GM12878 (cell line): ENCODE measurements at regions of chr1 and their contacts with region 1.

Region 1: GRCh38 chr1:16946646-16947045 is 24.9 kb downstream of the CROCC start:
- DNase-seq: no peak
- ATAC-seq: no peak
- H3K4me3 ChIP-seq: no peak overlapping the region
- H3K27ac ChIP-seq: no peak overlapping the region
- H3K4me1 ChIP-seq: no peaks in the 10 kb centered on the region
- H3K27me3 ChIP-seq: no peaks in the 10 kb centered on the region
- CTCF ChIP-seq: no peak
- EP300 ChIP-seq: no peak
- POLR2A ChIP-seq: no peak
- RAD21 ChIP-seq: no peak

Region 2: GRCh38 chr1:16613185-16614147 is 333.2 kb before region 1 on chr1 and contains the start of gene NBPF1:
- CTCF ChIA-PET with region 1: interaction called, 17 read pairs
- POLR2A ChIA-PET with region 1: no interaction called
- RAD21 ChIA-PET with region 1: interaction called, 5 read pairs
- SMC1A ChIA-PET with region 1: interaction called, 4 read pairs
- in situ Hi-C with region 1: no loop called
- intact Hi-C with region 1: no loop called
- DNase-seq: peak; percentile 56
- ATAC-seq: peak; percentile 99
- H3K4me3 ChIP-seq: peak within 1 kb of the TSS; percentile 73
- H3K27ac ChIP-seq: no peak within 1 kb of the TSS
- H3K4me1 ChIP-seq: peaks cover 4% of the 10 kb centered on the region
- H3K27me3 ChIP-seq: peaks cover 13 to 18% of the 10 kb centered on the region in 2 experiments
- CTCF ChIP-seq: peak in 1 of 3 experiments; percentile 7; a peak in 1 of 6 replicates
- EP300 ChIP-seq: no peak
- POLR2A ChIP-seq: peak; percentile 74; the same call in 1 of the 2 replicates
- RAD21 ChIP-seq: no peak
- polyA plus RNA-seq, gene NBPF1: 0.20 to 0.34 TPM

Region 3: GRCh38 chr1:16960560-16961296 is 14.1 kb after region 1 on chr1:
- CTCF ChIA-PET with region 1: interaction called, 22 read pairs
- POLR2A ChIA-PET with region 1: no interaction called
- RAD21 ChIA-PET with region 1: interaction called, 3 read pairs
- SMC1A ChIA-PET with region 1: interaction called, 10 read pairs
- in situ Hi-C with region 1: no loop called
- intact Hi-C with region 1: no loop called
- DNase-seq: peak; percentile 7
- ATAC-seq: peak; percentile 95
- H3K4me3 ChIP-seq: peak overlapping the region; percentile 43; the same call in 1 of the 2 replicates
- H3K27ac ChIP-seq: no peak overlapping the region
- H3K4me1 ChIP-seq: no peaks in the 10 kb centered on the region
- H3K27me3 ChIP-seq: no peaks in the 10 kb centered on the region
- CTCF ChIP-seq: peak; percentile 69 to 85 (median 70)
- EP300 ChIP-seq: no peak
- POLR2A ChIP-seq: no peak
- RAD21 ChIP-seq: peak; percentile 44